ENCODE measurements at regions of chr11 and their contacts with region 1.

Region 1: DNA sequence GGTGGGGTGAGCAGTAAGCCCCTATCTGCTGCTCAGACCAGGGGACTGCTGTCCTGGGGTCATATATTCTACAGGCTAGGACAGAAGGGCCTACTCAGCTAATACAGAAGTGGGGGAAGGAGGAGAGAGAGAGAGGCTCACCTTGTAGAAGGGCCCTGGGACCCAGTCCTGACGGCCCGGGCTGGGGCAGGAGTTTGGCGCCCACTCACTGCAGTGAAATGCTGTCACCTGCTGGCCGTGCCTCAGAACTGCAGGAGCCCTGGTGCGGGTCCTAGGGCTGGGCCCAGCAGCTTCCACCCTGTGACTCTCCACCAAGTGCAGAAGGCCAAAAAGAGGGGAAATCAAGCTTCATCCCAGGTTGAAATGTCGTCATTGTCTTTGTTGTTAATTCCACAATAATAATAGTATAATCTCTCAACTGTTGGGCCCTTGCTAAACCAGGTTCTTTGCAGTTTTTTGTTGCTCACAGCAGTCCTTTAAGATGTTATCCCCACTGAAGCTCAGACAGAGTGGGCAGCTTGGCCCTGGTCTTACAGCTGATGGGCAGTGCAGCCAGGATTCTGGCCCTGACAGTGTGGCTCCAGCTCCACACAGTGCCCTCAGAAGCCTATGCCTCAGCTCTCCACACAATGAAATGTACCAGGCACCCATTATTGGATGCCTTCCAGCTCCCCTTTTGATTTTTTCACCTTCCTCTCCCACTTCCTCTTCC is 29.6 kb downstream of the TRIM29 start:
- DNase-seq: peak; percentile 66
- H3K4me3 Mint-ChIP-seq: no peak overlapping the region
- H3K27ac Mint-ChIP-seq: no peak overlapping the region
- H3K4me1 Mint-ChIP-seq: no peaks in the 10 kb centered on the region
- H3K27me3 Mint-ChIP-seq: peaks cover 32% of the 10 kb centered on the region
- CTCF ChIP-seq: peak; percentile 99

Region 2: DNA sequence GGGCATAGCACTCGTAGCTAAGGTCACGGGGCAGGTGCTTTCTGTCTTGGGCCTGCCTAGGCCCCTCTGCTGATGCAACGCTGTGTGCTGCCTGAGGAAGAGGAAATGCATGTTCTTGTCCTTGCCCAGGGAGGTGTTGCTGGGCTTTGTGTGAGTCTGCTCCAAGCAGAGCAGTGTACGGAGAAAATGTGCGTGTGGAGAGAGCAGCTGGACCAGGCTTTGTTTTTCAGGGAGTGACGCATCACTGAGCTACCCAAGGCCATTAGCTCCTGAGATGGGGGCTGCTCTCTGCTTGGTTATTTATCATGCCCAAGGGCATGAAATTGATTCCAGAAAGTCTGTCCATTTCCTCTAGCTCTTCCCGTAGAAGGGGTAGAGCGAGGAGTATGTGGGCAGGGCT is 602.4 kb before region 1 on chr11:
- CTCF ChIA-PET with region 1: interaction called, 10 read pairs
- POLR2A ChIA-PET with region 1: no interaction called
- intact Hi-C with region 1: no loop called
- DNase-seq: no peak
- H3K4me3 Mint-ChIP-seq: no peak overlapping the region
- H3K27ac Mint-ChIP-seq: no peak overlapping the region
- H3K4me1 Mint-ChIP-seq: peaks cover 8% of the 10 kb centered on the region
- H3K27me3 Mint-ChIP-seq: peaks cover 19% of the 10 kb centered on the region
- CTCF ChIP-seq: no peak

Region 3: GRCh38 chr11:119666463-119667131 is 441.7 kb before region 1 on chr11:
- CTCF ChIA-PET with region 1: interaction called, 26 read pairs
- POLR2A ChIA-PET with region 1: interaction called, 5 read pairs
- intact Hi-C with region 1: loop called (anchors 1 kb)
- DNase-seq: peak; percentile 78
- H3K4me3 Mint-ChIP-seq: no peak overlapping the region
- H3K27ac Mint-ChIP-seq: no peak overlapping the region
- H3K4me1 Mint-ChIP-seq: peaks cover 14% of the 10 kb centered on the region
- H3K27me3 Mint-ChIP-seq: no peaks in the 10 kb centered on the region
- CTCF ChIP-seq: peak; percentile 98

Region 4: GRCh38 chr11:120013325-120014270 is 94.7 kb before region 1 on chr11:
- CTCF ChIA-PET with region 1: interaction called, 27 read pairs
- POLR2A ChIA-PET with region 1: interaction called, 4 read pairs
- intact Hi-C with region 1: loop called (anchors 2 kb)
- DNase-seq: peak; percentile 53
- H3K4me3 Mint-ChIP-seq: no peak overlapping the region
- H3K27ac Mint-ChIP-seq: no peak overlapping the region
- H3K4me1 Mint-ChIP-seq: no peaks in the 10 kb centered on the region
- H3K27me3 Mint-ChIP-seq: peaks cover 76% of the 10 kb centered on the region
- CTCF ChIP-seq: peak; percentile 79

Region 5: DNA sequence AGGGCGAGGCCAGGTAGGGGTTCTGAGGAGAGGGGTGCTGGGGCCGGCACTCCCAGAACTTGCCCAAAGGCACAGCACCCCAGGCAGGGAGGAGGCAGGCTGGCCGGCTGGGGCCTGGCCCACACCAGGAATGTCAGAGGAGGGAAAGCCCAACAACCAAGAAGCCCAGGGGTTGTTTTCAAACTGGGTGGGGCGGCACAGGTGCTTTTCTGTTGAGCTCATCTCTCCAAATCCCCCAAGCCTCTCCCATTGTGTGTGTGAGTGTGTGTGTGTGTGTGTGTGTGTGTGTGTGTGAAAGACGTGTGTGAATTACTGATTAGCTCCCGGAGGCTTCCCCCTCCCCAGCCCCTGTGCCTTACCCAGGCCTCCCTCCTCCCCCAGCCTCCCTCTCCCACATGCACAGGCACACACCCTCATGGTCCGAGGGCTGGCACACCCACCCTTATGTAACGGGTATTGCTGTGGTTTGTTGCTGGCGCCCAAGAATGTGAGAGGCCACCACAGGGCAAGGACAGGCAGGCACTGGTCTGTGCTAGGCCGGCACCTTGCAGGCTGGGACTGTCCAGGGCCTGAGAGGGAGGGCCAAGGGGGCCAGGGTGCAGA is 13.7 kb after region 1 on chr11:
- CTCF ChIA-PET with region 1: interaction called, 25 read pairs
- POLR2A ChIA-PET with region 1: interaction called, 37 read pairs
- intact Hi-C with region 1: no loop called
- DNase-seq: peak; percentile 60
- H3K4me3 Mint-ChIP-seq: peak overlapping the region; percentile 65
- H3K27ac Mint-ChIP-seq: peak overlapping the region; percentile 91
- H3K4me1 Mint-ChIP-seq: peaks cover 50% of the 10 kb centered on the region
- H3K27me3 Mint-ChIP-seq: no peaks in the 10 kb centered on the region
- CTCF ChIP-seq: no peak

Region 6: GRCh38 chr11:120172054-120172911 is 64.0 kb after region 1 on chr11:
- CTCF ChIA-PET with region 1: interaction called, 16 read pairs
- POLR2A ChIA-PET with region 1: no interaction called
- intact Hi-C with region 1: no loop called
- DNase-seq: peak; percentile 70
- H3K4me3 Mint-ChIP-seq: no peak overlapping the region
- H3K27ac Mint-ChIP-seq: no peak overlapping the region
- H3K4me1 Mint-ChIP-seq: no peaks in the 10 kb centered on the region
- H3K27me3 Mint-ChIP-seq: peaks cover 58% of the 10 kb centered on the region
- CTCF ChIP-seq: peak; percentile 87

Region 7: GRCh38 chr11:120239713-120240640 is 131.7 kb after region 1 on chr11 and contains the start of gene POU2F3:
- CTCF ChIA-PET with region 1: no interaction called
- POLR2A ChIA-PET with region 1: no interaction called
- intact Hi-C with region 1: no loop called
- DNase-seq: no peak
- H3K4me3 Mint-ChIP-seq: no peak within 1 kb of the TSS
- H3K27ac Mint-ChIP-seq: no peak within 1 kb of the TSS
- H3K4me1 Mint-ChIP-seq: no peaks in the 10 kb centered on the region
- H3K27me3 Mint-ChIP-seq: peaks cover 36% of the 10 kb centered on the region
- CTCF ChIP-seq: no peak
- total RNA-seq, gene POU2F3: not detected in 2 replicates